Dorsolateral prefrontal cortex (tissue), 120 donors: ENCODE measurements at regions of chr3 and their contacts with region 1.

Region 1: GRCh38 chr3:186852994-186853393 is 10.5 kb downstream of the ADIPOQ start:
- DNase-seq: no peak
- H3K4me3 ChIP-seq: no peak overlapping the region
- H3K27ac ChIP-seq: no peak overlapping the region
- H3K27me3 ChIP-seq: no peaks in the 10 kb centered on the region
- CTCF ChIP-seq: no peak

Region 2: DNA sequence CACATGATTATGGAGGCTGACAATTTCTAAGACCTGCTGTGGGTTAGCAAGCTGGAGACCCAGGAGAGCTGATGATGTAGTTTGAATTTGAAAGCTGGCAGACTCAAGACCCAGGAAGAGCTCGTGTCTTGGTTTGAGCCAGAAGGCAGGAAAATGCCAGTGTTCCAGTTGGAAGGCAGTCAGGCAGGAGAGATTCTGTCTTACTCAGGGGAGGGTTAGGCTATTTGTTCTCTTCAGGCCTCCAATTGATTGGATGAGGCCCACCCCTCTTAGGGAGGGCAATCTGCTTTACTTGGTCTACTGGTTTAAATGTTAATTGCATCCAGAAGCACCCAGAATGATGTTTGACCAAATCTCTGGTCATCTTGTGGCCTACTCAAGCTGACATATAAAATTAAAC is 987.7 kb before region 1 on chr3:
- intact Hi-C with region 1: no loop called
- DNase-seq: no peak
- H3K4me3 ChIP-seq: no peak overlapping the region
- H3K27ac ChIP-seq: no peak overlapping the region
- H3K27me3 ChIP-seq: peaks cover 0 to 4% (median 0%) of the 10 kb centered on the region in 45 donors
- CTCF ChIP-seq: no peak

Region 3: DNA sequence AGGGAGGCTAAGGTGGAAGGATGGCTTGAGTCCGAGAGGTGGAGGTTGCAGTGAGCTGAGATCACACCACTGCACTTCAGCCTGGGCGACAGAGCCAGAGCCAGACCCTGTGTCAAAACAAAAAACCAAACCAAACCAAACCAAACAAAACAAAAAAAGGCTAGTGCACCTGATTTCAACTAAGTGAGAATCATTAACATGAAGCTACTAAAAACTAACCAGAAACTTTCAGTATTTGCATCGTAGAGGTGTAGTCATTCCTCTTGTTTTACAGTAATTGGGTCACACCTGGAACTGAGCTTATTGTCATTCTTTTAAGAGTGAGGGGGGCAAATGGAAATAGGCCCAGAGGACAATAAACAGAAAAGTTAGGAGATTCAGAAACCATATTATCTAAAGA is 135.8 kb after region 1 on chr3:
- intact Hi-C with region 1: no loop called
- DNase-seq: no peak
- H3K4me3 ChIP-seq: no peak overlapping the region
- H3K27ac ChIP-seq: peak overlapping the region in 4 of 59 donors; percentile 5 to 55 (median 16)
- H3K27me3 ChIP-seq: no peaks in the 10 kb centered on the region
- CTCF ChIP-seq: no peak

Region 4: GRCh38 chr3:187164885-187165543 is 312.0 kb after region 1 on chr3:
- intact Hi-C with region 1: loop called (anchors 5 to 10 kb)
- DNase-seq: no peak
- H3K4me3 ChIP-seq: no peak overlapping the region
- H3K27ac ChIP-seq: no peak overlapping the region
- H3K27me3 ChIP-seq: peaks cover 0 to 3% (median 0%) of the 10 kb centered on the region in 45 donors
- CTCF ChIP-seq: peak; percentile 61 to 89 (median 78)